Activated B cell treated with CpG ODN at 0.5 μM for 24 hours (primary cell): ENCODE measurements at regions of chr5 and their contacts with region 1.

Region 1: DNA sequence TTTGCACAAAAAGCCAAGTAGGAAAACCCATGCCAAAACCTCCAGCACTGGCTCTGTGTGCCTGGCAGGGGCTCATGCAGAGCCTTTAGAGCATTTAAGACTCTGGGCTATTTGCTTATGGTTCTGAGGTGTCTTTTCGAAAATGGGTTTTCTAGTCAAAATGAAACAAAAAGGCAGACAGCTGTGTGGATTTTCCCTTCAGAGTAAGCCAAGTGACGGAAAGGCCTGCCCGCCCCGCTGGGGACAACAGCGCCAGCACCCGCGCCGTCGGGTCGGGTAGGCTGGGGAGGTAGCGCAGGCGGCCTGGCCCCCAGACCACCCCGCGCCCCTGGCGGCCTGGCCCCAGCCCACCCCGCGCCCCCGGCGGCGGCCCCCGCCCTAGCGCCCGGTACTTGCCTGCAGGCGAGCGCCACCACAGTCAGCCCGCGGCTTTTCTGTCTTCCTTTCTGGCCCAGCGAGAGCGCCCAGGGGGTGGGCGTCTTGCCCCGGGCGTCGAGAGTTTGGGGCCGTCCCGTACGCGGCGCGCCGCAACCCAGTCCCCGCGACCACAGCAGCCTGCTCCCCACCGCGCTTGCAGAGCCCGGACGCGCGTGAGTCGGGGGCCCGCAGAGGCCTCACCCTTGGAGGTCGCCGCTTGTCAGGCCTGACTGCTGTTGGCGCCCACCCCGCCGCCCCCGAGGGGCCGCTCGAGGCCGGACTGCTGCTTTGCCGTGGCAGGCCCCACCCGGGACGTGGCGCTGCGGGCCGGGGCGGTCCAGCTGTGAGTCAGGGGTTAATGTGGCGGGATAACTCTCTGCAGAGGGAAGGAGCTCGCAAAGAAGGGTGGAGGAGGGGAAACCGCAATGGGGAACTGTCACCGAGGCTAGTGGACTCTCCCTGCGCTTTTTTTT is at the start of gene TICAM2:
- DNase-seq: peak; percentile 68
- ATAC-seq: peak; percentile 80
- H3K4me3 Mint-ChIP-seq: peak within 1 kb of the TSS; percentile 88
- H3K27ac Mint-ChIP-seq: peak within 1 kb of the TSS; percentile 98
- H3K4me1 Mint-ChIP-seq: peaks cover 56% of the 10 kb centered on the region
- H3K27me3 Mint-ChIP-seq: no peaks in the 10 kb centered on the region
- CTCF ChIP-seq: no peak
- total RNA-seq, gene TICAM2: 12.4 and 13.3 TPM in 2 replicates

Region 2: GRCh38 chr5:115579747-115580173 is 22.2 kb before region 1 on chr5:
- CTCF ChIA-PET with region 1: interaction called, 3 read pairs
- POLR2A ChIA-PET with region 1: interaction called, 27 read pairs
- intact Hi-C with region 1: loop called (anchors 1 kb)
- DNase-seq: no peak
- ATAC-seq: peak; percentile 85
- H3K4me3 Mint-ChIP-seq: peak overlapping the region; percentile 74
- H3K27ac Mint-ChIP-seq: peak overlapping the region; percentile 83
- H3K4me1 Mint-ChIP-seq: peaks cover 50% of the 10 kb centered on the region
- H3K27me3 Mint-ChIP-seq: no peaks in the 10 kb centered on the region
- CTCF ChIP-seq: no peak

Region 3: DNA sequence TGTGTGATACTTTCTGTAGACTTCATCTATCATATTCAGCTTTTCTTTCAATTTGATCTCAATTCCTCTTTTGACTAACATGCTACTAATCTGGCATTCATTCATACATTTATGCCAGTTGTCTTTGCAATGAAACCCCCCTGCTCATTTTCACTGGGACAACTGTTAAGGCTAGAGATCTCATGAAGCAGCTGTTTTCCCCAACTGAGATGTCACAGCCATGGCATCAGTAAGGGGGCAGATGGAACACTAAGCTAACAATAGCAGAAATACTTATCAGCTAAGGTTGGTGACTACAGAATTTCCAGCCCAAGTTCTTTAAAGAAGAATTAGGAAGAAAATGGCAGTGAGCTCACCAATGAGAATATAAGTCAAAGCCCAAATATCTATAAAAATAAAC is 14.5 kb after region 1 on chr5:
- CTCF ChIA-PET with region 1: no interaction called
- POLR2A ChIA-PET with region 1: interaction called, 12 read pairs
- intact Hi-C with region 1: no loop called
- DNase-seq: no peak
- ATAC-seq: no peak
- H3K4me3 Mint-ChIP-seq: no peak overlapping the region
- H3K27ac Mint-ChIP-seq: peak overlapping the region; percentile 30
- H3K4me1 Mint-ChIP-seq: peaks cover 8% of the 10 kb centered on the region
- H3K27me3 Mint-ChIP-seq: no peaks in the 10 kb centered on the region
- CTCF ChIP-seq: no peak